Testis (tissue), 5 donors: ENCODE measurements at regions of chr16 and their contacts with region 1.

Region 1: GRCh38 chr16:75110637-75111513 is 5.7 kb downstream of the LDHD start:
- DNase-seq: peak; percentile 94
- H3K4me3 ChIP-seq: no peak overlapping the region
- H3K27ac ChIP-seq: peak overlapping the region; percentile 41 to 59
- H3K4me1 ChIP-seq: peaks cover 42% of the 10 kb centered on the region
- H3K27me3 ChIP-seq: no peaks in the 10 kb centered on the region
- CTCF ChIP-seq: peak; percentile 85 to 90 (median 85)
- POLR2A ChIP-seq: no peak

Region 2: GRCh38 chr16:74998481-74999218 is 112.2 kb before region 1 on chr16 and contains the start of gene ZNRF1:
- intact Hi-C with region 1: loop called (anchors 2 kb)
- DNase-seq: peak; percentile 83
- H3K4me3 ChIP-seq: peak within 1 kb of the TSS; percentile 86 to 89
- H3K27ac ChIP-seq: peak within 1 kb of the TSS; percentile 83 to 88
- H3K4me1 ChIP-seq: peaks cover 25% of the 10 kb centered on the region
- H3K27me3 ChIP-seq: no peaks in the 10 kb centered on the region
- CTCF ChIP-seq: peak; percentile 79 to 85 (median 83)
- POLR2A ChIP-seq: no peak
- total RNA-seq, gene ZNRF1: 90.4 to 93.0 TPM

Region 3: DNA sequence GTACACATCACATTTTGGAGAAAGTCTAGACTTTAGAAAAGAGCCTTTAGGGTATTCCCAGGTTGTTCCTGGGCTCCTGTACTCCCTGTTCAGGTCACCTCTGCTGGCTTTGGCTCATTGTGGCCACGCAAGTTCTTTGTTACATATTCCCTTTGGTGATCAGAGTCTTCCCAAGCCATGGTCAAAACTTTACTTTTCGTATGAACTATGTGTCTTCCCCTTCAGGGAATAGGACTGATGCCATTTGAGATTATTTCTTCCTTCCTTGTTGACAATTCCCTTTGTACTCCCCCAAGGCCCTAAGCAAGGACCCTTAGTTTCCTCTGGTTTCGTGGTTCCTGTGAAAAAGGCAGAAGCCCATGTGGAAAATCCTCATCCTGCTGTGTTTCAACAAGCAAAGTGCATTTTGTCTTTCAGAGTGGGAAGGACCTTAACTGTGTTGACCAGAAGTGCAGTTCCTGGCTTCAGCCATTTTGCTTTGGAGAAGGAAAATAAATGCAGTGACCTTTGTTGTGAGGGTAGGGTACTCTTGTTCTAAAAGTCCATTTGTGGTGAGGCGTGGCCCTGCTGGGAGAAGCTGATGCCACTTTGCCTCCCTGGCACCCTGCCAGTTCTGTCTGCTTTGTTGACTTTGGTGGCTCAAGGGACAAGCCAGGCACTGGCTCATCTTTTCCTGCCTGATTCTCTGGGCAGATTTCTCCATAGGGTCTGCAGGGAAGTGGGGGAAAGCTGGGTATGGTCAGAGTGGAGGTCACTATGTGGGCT is 56.9 kb before region 1 on chr16:
- intact Hi-C with region 1: no loop called
- DNase-seq: peak; percentile 64
- H3K4me3 ChIP-seq: no peak overlapping the region
- H3K27ac ChIP-seq: peak overlapping the region in 1 of 2 donors; percentile 53
- H3K4me1 ChIP-seq: peaks cover 13% of the 10 kb centered on the region
- H3K27me3 ChIP-seq: no peaks in the 10 kb centered on the region
- CTCF ChIP-seq: no peak
- POLR2A ChIP-seq: no peak